CD8-positive, alpha-beta T cell (primary cell): ENCODE measurements at regions of chr11 and their contacts with region 1.

Region 1: GRCh38 chr11:47373876-47374720 is 4.2 kb downstream of the SPI1 start:
- DNase-seq: peak; percentile 66 to 94 (median 86)
- ATAC-seq: peak; percentile 97
- H3K4me3 ChIP-seq: no peak overlapping the region
- H3K4me3 Mint-ChIP-seq: no peak overlapping the region
- H3K27ac ChIP-seq: no peak overlapping the region
- H3K27ac Mint-ChIP-seq: no peak overlapping the region
- H3K4me1 ChIP-seq: peaks cover 3% of the 10 kb centered on the region
- H3K4me1 Mint-ChIP-seq: peaks cover 9% of the 10 kb centered on the region
- H3K27me3 ChIP-seq: no peaks in the 10 kb centered on the region
- H3K27me3 Mint-ChIP-seq: no peaks in the 10 kb centered on the region
- CTCF ChIP-seq: peak; percentile 91

Region 2: DNA sequence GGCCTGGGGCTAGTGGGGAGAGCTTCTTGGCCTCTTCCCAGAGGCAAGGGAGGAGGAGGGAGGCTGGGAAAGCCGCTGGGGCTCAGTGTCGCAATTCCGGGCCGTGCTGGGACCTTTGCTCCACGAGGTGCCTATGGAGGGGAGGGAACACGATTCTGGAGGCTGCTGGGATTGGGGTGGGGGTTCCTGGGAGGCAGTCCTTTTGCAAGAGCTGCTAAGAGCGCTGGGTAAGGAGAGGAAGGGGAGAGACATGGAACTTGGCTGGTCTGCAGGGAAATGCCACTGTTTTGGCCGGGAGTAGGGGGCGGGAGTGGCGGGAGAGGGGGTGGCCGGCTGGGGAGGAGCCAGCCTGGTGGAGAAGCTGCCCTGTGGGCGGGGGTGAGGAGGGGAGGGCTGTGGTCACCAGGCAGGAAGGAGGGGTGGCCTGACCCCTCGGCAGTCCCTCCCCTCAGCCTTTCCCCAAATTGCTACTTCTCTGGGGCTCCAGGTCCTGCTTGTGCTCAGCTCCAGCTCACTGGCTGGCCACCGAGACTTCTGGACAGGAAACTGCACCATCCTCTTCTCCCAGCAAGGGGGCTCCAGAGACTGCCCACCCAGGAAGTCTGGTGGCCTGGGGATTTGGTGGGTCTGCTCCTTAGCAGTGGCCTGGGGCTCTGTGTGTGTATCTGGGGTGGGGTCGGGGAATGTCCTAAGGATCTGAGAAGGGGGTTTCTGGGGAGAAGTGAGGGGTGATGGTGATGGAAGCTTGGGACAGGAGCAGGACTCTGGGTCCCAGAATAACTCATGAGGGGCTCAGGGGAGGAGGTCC is 116.4 kb before region 1 on chr11 and contains the start of gene NR1H3:
- CTCF ChIA-PET with region 1: no interaction called
- POLR2A ChIA-PET with region 1: no interaction called
- intact Hi-C with region 1: no loop called
- DNase-seq: peak in 2 of 9 experiments; percentile 24 to 42
- ATAC-seq: peak; percentile 40
- H3K4me3 ChIP-seq: no peak within 1 kb of the TSS
- H3K4me3 Mint-ChIP-seq: no peak within 1 kb of the TSS
- H3K27ac ChIP-seq: no peak within 1 kb of the TSS
- H3K27ac Mint-ChIP-seq: no peak within 1 kb of the TSS
- H3K4me1 ChIP-seq: peaks cover 10% of the 10 kb centered on the region
- H3K4me1 Mint-ChIP-seq: peaks cover 10% of the 10 kb centered on the region
- H3K27me3 ChIP-seq: no peaks in the 10 kb centered on the region
- H3K27me3 Mint-ChIP-seq: no peaks in the 10 kb centered on the region
- CTCF ChIP-seq: no peak
- total RNA-seq, gene NR1H3: 1.3 to 1.5 TPM

Region 3: GRCh38 chr11:47399860-47400767 is 26.0 kb after region 1 on chr11:
- CTCF ChIA-PET with region 1: interaction called, 175 read pairs
- POLR2A ChIA-PET with region 1: interaction called, 4 read pairs
- intact Hi-C with region 1: no loop called
- DNase-seq: peak in 8 of 9 experiments; percentile 29 to 74 (median 42)
- ATAC-seq: peak; percentile 88
- H3K4me3 ChIP-seq: peak overlapping the region; percentile 63 to 82
- H3K4me3 Mint-ChIP-seq: peak overlapping the region; percentile 81
- H3K27ac ChIP-seq: peak overlapping the region; percentile 56 to 60
- H3K27ac Mint-ChIP-seq: peak overlapping the region; percentile 71
- H3K4me1 ChIP-seq: peaks cover 28% of the 10 kb centered on the region
- H3K4me1 Mint-ChIP-seq: peaks cover 34% of the 10 kb centered on the region
- H3K27me3 ChIP-seq: no peaks in the 10 kb centered on the region
- H3K27me3 Mint-ChIP-seq: no peaks in the 10 kb centered on the region
- CTCF ChIP-seq: no peak

Region 4: GRCh38 chr11:47415949-47416472 is 41.9 kb after region 1 on chr11:
- CTCF ChIA-PET with region 1: interaction called, 139 read pairs
- POLR2A ChIA-PET with region 1: interaction called, 4 read pairs
- intact Hi-C with region 1: loop called in 1 of 2 experiments (anchors 1 kb)
- DNase-seq: no peak
- ATAC-seq: no peak
- H3K4me3 ChIP-seq: no peak overlapping the region
- H3K4me3 Mint-ChIP-seq: no peak overlapping the region
- H3K27ac ChIP-seq: no peak overlapping the region
- H3K27ac Mint-ChIP-seq: no peak overlapping the region
- H3K4me1 ChIP-seq: no peaks in the 10 kb centered on the region
- H3K4me1 Mint-ChIP-seq: no peaks in the 10 kb centered on the region
- H3K27me3 ChIP-seq: no peaks in the 10 kb centered on the region
- H3K27me3 Mint-ChIP-seq: no peaks in the 10 kb centered on the region
- CTCF ChIP-seq: no peak

Region 5: DNA sequence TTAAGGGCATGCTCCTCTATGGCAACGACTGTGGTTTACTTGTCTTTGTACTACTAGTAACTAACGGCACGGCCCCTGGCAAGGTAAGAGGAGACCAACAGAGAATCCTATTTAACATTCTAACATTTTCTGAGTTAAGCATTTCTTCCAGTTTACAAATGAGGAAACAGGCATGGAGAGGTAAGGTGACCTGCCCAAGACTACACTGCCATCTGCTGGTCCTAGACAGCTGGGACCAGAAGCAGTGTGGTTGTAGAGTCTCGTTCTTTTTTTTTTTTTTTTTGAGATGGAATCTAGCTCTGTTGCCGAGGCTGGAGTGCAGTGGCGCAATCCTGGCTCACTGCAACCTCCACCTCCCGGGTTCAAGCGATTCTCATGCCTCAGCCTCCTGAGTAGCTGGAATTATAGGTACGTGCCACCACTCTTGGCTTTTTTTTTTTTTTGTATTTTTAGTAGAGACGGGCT is 80.1 kb after region 1 on chr11:
- CTCF ChIA-PET with region 1: interaction called, 24 read pairs
- POLR2A ChIA-PET with region 1: no interaction called
- intact Hi-C with region 1: loop called (anchors 1 to 2 kb)
- DNase-seq: peak; percentile 36 to 86 (median 61)
- ATAC-seq: peak; percentile 93
- H3K4me3 ChIP-seq: no peak overlapping the region
- H3K4me3 Mint-ChIP-seq: no peak overlapping the region
- H3K27ac ChIP-seq: no peak overlapping the region
- H3K27ac Mint-ChIP-seq: no peak overlapping the region
- H3K4me1 ChIP-seq: no peaks in the 10 kb centered on the region
- H3K4me1 Mint-ChIP-seq: peaks cover 5% of the 10 kb centered on the region
- H3K27me3 ChIP-seq: no peaks in the 10 kb centered on the region
- H3K27me3 Mint-ChIP-seq: no peaks in the 10 kb centered on the region
- CTCF ChIP-seq: peak; percentile 71

Region 6: DNA sequence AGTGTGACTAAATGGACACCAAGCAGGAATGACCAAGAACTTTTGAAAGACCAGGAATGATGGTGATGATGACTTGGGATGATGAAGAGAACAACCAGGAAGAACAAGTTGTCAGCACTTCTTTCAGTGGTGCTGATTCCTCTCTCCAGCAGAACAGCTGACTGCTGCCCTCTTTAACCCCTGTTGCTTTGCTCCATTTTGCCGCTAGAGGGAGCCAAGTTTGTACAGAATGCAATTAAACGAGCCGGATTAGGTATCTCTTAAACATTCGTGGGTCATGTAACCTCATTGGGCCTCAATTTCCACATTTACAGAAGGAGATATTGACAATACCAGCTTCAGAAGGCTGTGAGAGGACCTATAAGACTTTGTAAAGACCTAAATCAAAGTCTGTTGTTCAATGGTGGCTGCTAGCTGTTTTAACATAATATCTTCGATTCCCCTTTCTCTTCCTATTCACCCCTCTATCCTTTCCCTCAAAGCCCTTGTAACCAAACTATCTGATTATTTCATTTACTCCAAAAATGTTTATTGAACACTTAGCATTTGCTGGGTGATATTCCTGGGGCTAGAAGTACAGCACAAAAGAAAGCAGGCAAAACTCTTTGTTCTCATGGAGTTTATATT is 933.8 kb after region 1 on chr11:
- CTCF ChIA-PET with region 1: no interaction called
- POLR2A ChIA-PET with region 1: no interaction called
- intact Hi-C with region 1: no loop called
- DNase-seq: peak; percentile 40 to 71 (median 51)
- ATAC-seq: no peak
- H3K4me3 ChIP-seq: no peak overlapping the region
- H3K4me3 Mint-ChIP-seq: no peak overlapping the region
- H3K27ac ChIP-seq: no peak overlapping the region
- H3K27ac Mint-ChIP-seq: no peak overlapping the region
- H3K4me1 ChIP-seq: no peaks in the 10 kb centered on the region
- H3K4me1 Mint-ChIP-seq: peaks cover 4% of the 10 kb centered on the region
- H3K27me3 ChIP-seq: no peaks in the 10 kb centered on the region
- H3K27me3 Mint-ChIP-seq: peaks cover 34% of the 10 kb centered on the region
- CTCF ChIP-seq: peak; percentile 75